ENCODE measurements at regions of chr12 and their contacts with region 1.

Region 1: GRCh38 chr12:48758221-48758620 is 30.7 kb downstream of the ADCY6 start:
- DNase-seq: no peak
- H3K4me3 ChIP-seq: no peak overlapping the region
- H3K4me3 Mint-ChIP-seq: no peak overlapping the region
- H3K27ac ChIP-seq: no peak overlapping the region
- H3K27ac Mint-ChIP-seq: no peak overlapping the region
- H3K4me1 ChIP-seq: no peaks in the 10 kb centered on the region
- H3K4me1 Mint-ChIP-seq: no peaks in the 10 kb centered on the region
- H3K27me3 ChIP-seq: no peaks in the 10 kb centered on the region
- H3K27me3 Mint-ChIP-seq: no peaks in the 10 kb centered on the region

Region 2: GRCh38 chr12:48631057-48631456 is 127.2 kb before region 1 on chr12:
- CTCF ChIA-PET with region 1: no interaction called
- POLR2A ChIA-PET with region 1: no interaction called
- intact Hi-C with region 1: no loop called
- DNase-seq: no peak
- H3K4me3 ChIP-seq: no peak overlapping the region
- H3K4me3 Mint-ChIP-seq: no peak overlapping the region
- H3K27ac ChIP-seq: no peak overlapping the region
- H3K27ac Mint-ChIP-seq: no peak overlapping the region
- H3K4me1 ChIP-seq: no peaks in the 10 kb centered on the region
- H3K4me1 Mint-ChIP-seq: no peaks in the 10 kb centered on the region
- H3K27me3 ChIP-seq: no peaks in the 10 kb centered on the region
- H3K27me3 Mint-ChIP-seq: peaks cover 13 to 26% of the 10 kb centered on the region in 2 donors

Region 3: DNA sequence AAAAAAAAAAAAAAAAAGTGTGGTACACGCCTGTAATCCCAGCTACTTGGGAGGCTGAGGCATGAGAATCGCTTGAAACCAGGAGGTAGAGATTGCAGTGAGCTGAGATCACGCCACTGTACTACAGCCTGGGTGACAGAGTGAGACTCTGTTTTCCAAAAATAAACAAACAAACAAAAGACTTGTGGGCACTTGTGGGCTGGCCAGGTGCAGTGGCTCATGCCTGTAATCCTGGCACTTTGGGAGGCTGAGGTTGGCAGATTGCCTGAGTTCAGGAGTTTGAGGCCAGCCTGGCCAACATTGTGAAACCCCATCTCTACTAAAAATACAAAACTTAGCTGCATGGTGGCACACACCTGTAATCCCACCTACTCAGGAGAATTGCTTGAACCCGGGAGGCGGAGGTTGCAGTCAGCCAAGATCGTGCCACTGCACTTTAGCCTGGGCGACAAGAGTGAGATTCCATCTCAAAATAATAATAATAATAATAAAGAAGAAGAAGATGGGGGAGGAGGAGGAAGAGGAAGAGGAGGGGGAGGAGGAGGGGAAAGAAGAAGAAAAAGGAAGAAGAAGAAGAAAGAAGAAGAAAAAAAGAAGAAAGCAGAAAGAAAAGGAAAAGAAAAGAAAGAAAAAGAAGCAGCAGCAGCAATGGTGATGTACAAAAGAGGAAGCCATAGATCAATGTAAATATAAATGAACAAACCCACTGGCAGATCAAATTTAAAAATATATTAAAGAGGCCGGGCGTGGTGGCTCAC is 13.8 kb before region 1 on chr12:
- CTCF ChIA-PET with region 1: interaction called, 10 read pairs
- POLR2A ChIA-PET with region 1: no interaction called
- intact Hi-C with region 1: no loop called
- DNase-seq: no peak
- H3K4me3 ChIP-seq: no peak overlapping the region
- H3K4me3 Mint-ChIP-seq: no peak overlapping the region
- H3K27ac ChIP-seq: no peak overlapping the region
- H3K27ac Mint-ChIP-seq: no peak overlapping the region
- H3K4me1 ChIP-seq: no peaks in the 10 kb centered on the region
- H3K4me1 Mint-ChIP-seq: peaks cover 0 to 1% (median 0%) of the 10 kb centered on the region in 4 donors
- H3K27me3 ChIP-seq: no peaks in the 10 kb centered on the region
- H3K27me3 Mint-ChIP-seq: peaks cover 4 to 6% of the 10 kb centered on the region in 2 donors

Region 4: DNA sequence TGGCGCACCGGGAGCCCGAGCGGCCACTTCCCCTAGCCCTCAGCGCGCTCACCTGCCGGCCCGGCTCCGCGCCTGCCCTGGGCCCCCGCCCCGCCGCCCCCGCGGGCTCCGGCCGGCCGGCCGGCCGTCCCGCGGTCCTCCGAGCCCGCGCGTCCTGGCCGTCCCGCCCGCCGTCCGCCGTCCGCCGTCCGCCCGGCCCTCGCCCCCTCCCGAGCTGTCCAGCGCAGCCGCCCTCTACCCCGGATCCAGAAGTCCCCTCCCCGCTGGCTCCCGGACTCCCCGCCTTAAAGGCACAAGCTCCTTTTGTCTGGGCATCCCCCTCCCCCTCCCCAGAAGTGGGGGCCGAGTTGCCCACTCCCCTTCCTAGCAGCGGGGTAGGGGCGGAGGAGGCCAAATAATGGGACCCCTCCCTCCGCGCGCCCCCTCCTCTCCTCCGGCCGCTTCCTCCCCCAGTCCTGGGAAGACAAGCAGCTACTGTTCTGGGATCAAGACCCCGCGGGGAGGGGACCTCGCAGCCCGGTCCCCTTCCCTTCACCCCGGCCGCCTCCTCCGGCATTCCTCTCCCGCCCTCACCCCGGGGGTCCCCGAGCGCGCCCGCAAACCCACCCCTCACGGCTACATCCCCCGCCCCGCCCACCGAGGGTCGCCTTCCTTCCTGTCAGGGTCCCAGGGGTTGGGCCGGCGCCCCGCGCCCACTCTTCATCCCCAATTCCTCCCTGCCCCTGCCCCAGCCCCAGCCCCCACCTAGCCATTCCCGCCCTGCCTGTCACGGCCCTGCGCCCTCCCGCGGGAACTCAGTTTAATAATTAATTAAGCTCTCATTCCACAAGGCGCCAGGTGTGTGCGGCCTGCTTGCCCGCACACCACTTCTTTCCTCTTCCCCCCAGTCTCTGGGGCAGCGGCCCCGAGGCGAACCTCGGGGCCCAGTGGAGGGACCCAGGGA is 30.9 kb after region 1 on chr12 and contains the start of gene ADCY6:
- CTCF ChIA-PET with region 1: interaction called, 156 read pairs
- POLR2A ChIA-PET with region 1: no interaction called
- intact Hi-C with region 1: no loop called
- DNase-seq: peak in 1 of 5 donors; percentile 8
- H3K4me3 ChIP-seq: no peak within 1 kb of the TSS
- H3K4me3 Mint-ChIP-seq: peak within 1 kb of the TSS; percentile 70 to 84 (median 76)
- H3K27ac ChIP-seq: no peak within 1 kb of the TSS
- H3K27ac Mint-ChIP-seq: no peak within 1 kb of the TSS
- H3K4me1 ChIP-seq: no peaks in the 10 kb centered on the region
- H3K4me1 Mint-ChIP-seq: peaks cover 0 to 18% (median 5%) of the 10 kb centered on the region in 4 donors
- H3K27me3 ChIP-seq: peaks cover 15% of the 10 kb centered on the region
- H3K27me3 Mint-ChIP-seq: peaks cover 34 to 47% of the 10 kb centered on the region in 2 donors
- total RNA-seq, gene ADCY6: not detected

Measured in CD4-positive, alpha-beta memory T cell (primary cell).